Common myeloid progenitor, CD34-positive (primary cell): ENCODE measurements at regions of chr12 and their contacts with region 1.

Region 1: DNA sequence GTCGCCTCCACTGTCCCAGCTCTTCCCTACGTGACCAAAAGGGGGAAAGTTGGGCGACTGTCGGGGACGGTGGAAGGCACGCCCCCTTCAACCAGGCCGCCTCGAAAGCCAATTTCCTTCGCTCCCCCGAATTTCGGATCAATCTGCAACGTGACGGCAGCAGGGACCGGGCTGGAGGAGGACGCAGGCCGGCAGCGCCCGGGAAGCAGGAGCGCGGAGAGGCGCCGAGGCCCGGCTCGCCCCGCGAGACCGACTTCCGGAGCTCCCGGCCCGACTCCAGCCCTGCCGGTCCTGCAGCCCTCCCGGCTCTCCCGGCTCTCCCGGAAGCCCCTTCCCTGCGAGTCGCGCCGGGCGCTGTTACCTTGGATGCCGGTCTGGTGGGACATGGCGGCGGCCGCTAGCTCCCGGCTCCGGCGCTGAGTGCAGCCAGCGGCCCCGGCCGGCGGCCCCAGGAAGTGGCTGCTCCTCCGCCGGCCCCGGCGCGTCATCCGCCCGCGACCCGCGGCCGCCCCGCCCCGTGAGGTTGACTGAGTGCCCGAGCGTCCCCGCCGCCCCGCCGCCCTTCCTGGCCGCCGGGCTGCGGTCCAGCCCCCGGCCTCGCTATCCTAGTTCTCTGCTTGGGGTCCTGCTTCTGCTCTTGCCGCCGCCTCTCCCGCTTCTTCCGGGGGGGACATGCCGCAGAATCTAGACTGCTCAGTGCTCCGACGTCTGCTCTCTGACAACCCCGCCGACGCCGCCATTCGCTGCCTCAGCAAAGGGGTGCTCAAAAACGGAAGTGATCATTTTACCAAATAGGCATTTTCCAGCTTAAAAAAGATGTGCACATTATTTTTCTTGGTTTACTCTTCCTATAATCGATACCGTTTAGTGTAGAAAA is at the start of gene TWF1:
- DNase-seq: peak; percentile 80 to 91 (median 84)
- H3K4me3 ChIP-seq: peak within 1 kb of the TSS; percentile 79 to 99 (median 97)
- H3K27ac ChIP-seq: peak within 1 kb of the TSS; percentile 92 to 97
- H3K4me1 ChIP-seq: peaks cover 8 to 21% (median 19%) of the 10 kb centered on the region in 4 experiments
- H3K27me3 ChIP-seq: no peaks in the 10 kb centered on the region

Region 2: DNA sequence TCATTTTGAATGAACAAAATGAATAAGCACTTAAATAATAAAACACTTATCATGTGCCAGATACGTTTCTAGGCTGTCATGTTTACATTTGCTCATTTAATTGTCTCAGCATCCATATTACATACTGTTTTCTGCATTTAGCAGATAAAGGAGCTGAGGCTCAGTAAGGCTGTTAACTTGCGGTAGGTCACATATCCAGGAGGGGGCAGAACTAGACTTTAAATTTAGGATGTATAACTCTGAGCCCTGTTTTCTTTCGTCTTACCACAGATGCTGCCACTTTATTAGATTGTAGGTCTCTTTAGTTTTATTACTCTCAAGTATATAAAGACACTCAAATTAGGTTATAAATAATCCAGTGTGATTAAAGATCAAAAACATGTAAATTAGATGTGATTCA is 29.6 kb before region 1 on chr12:
- CTCF ChIA-PET with region 1: interaction called, 11 read pairs
- POLR2A ChIA-PET with region 1: no interaction called
- DNase-seq: peak; percentile 27 to 66 (median 60)
- H3K4me3 ChIP-seq: no peak overlapping the region
- H3K27ac ChIP-seq: no peak overlapping the region
- H3K4me1 ChIP-seq: no peaks in the 10 kb centered on the region
- H3K27me3 ChIP-seq: no peaks in the 10 kb centered on the region

Region 3: GRCh38 chr12:43835656-43836474 is 29.8 kb after region 1 on chr12 and contains the start of gene TMEM117:
- CTCF ChIA-PET with region 1: interaction called, 17 read pairs
- POLR2A ChIA-PET with region 1: interaction called, 4 read pairs
- DNase-seq: peak; percentile 48 to 78 (median 64)
- H3K4me3 ChIP-seq: peak within 1 kb of the TSS; percentile 32 to 86 (median 74)
- H3K27ac ChIP-seq: peak within 1 kb of the TSS; percentile 42 to 80
- H3K4me1 ChIP-seq: peaks cover 18 to 33% (median 28%) of the 10 kb centered on the region in 4 experiments
- H3K27me3 ChIP-seq: peaks cover 0 to 2% (median 0%) of the 10 kb centered on the region in 5 experiments